ENCODE measurements at regions of chr10 and their contacts with region 1.

Region 1: GRCh38 chr10:32207544-32207943 is 139.4 kb downstream of the EPC1 start:
- DNase-seq: peak; percentile 28
- ATAC-seq: 0 out of 2 replicates have a peak, but pooled peaks have one; percentile 30
- H3K4me3 ChIP-seq: no peak overlapping the region
- H3K27ac ChIP-seq: no peak overlapping the region
- H3K4me1 ChIP-seq: peaks cover 1% of the 10 kb centered on the region; the same call in 1 of the 2 replicates
- H3K27me3 ChIP-seq: no peaks in the 10 kb centered on the region; the same call in 1 of the 2 replicates
- CTCF ChIP-seq: peak; percentile 63
- POLR2A ChIP-seq: no peak
- RAD21 ChIP-seq: peak; percentile 76

Region 2: DNA sequence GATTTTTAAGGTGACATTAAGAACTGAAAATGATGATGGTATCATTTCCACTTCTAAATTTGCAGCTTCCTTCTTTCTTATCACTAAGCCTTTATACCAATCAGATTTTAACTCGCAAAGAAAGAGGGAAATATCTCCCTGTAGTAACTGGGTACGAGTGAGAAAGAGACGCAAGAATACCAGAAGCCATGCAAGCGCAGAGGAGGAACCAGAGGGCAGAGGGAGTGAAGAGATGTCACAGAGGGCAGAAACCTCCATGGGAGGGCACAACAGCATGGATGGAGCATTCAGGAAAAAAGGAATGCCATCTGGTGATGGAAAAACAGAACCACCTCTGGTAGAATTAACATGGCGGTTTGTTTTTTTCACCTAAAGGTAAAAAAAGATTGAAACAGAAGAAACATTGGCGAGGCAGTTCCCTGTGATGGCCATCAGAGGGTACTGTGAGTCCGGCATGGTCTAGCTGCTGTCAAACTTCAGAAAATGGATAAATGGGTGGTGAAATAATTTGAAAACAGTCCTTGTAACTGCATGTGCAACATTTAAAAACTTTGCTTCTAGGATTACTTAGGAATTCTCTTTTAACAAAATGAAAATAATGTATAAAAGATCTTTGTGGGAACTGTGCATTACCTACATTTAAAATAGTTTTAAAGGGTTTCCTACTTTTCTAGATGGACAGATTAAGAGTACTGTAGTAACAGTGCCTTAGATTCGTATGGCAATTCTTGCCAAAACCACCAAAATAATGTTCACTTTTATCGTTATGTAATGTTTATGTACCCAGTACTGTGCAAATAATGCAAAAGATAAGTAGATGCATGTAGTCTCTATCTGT is 370.8 kb before region 1 on chr10:
- CTCF ChIA-PET with region 1: interaction called, 6 read pairs
- POLR2A ChIA-PET with region 1: no interaction called
- dilution Hi-C with region 1: no loop called
- in situ Hi-C with region 1: no loop called
- intact Hi-C with region 1: loop called (anchors 5 kb)
- DNase-seq: peak; percentile 48
- ATAC-seq: peak; percentile 65
- H3K4me3 ChIP-seq: no peak overlapping the region
- H3K27ac ChIP-seq: no peak overlapping the region
- H3K4me1 ChIP-seq: no peaks in the 10 kb centered on the region
- H3K27me3 ChIP-seq: no peaks in the 10 kb centered on the region
- CTCF ChIP-seq: peak; percentile 71
- POLR2A ChIP-seq: no peak
- RAD21 ChIP-seq: peak; percentile 80

Region 3: DNA sequence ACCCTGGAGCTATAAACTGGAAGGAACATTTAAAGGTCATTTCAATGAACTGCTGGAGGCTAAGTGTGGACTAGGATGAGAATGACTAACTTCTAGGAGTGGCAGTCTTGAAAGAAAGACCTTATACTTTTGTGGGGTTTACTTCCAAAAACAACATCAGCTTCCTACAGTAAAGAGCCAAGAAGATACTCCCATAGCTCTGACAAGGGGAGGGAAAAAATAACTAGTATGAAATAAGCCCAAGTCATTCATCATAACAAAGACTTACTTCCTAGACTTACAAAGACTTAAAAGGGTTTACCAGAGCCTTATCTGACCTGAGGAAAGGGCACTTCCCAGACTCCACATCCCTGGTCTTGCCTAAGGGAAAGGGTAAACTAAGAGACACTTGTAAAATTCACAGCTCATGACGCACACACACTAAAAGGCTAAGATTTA is 310.6 kb before region 1 on chr10:
- CTCF ChIA-PET with region 1: no interaction called
- POLR2A ChIA-PET with region 1: no interaction called
- dilution Hi-C with region 1: no loop called
- in situ Hi-C with region 1: no loop called
- intact Hi-C with region 1: no loop called
- DNase-seq: peak; percentile 69
- ATAC-seq: peak; percentile 81
- H3K4me3 ChIP-seq: no peak overlapping the region
- H3K27ac ChIP-seq: 0 out of 2 replicates have a peak overlapping the region, but pooled peaks have one; percentile 16
- H3K4me1 ChIP-seq: peaks cover 9% of the 10 kb centered on the region
- H3K27me3 ChIP-seq: no peaks in the 10 kb centered on the region
- CTCF ChIP-seq: no peak
- POLR2A ChIP-seq: no peak
- RAD21 ChIP-seq: no peak

Region 4: DNA sequence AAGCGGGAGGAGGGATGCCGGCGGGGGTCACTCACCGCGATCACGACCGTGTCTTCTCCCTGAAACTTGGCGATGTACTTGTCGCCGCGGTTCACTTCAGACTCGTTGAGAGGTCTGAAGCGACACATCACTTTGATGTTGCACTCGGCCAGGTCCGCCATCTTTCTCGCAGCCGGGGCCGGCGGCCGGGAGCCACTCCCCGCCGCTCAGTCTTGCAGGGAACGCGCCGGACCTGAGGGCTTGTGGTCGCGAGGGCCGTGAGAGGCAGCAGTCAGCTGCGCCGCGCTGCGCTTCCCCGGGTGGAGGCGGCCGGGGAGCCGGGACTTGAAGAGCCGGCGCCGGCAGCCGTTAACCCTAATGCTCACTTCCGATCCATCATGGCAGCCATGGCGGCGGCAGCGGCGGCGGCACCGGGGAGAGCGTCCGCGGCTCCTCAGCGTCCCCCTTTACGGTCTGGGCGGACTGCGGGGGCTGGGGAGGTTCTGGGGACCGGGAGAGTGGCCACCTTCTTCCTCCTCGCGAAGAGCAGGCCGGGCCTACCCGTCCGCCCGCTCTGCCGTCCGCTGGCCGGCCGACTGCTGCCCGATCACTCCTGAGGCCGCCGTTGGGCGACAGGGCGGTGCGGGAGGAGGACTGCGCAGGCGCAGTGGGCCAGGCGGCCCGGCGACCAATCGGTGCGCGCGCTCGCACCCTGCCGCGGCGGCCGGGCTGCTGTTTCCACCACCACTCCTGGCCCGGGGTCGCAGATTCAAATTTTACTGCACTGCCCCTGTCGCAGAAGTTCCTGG is 151.5 kb before region 1 on chr10 and contains the start of gene KIF5B:
- CTCF ChIA-PET with region 1: no interaction called
- POLR2A ChIA-PET with region 1: no interaction called
- dilution Hi-C with region 1: no loop called
- in situ Hi-C with region 1: no loop called
- intact Hi-C with region 1: loop called (anchors 10 kb)
- DNase-seq: peak; percentile 81
- ATAC-seq: peak; percentile 90
- H3K4me3 ChIP-seq: peak within 1 kb of the TSS; percentile 93
- H3K27ac ChIP-seq: peak within 1 kb of the TSS; percentile 96
- H3K4me1 ChIP-seq: peaks cover 4% of the 10 kb centered on the region; the same call in 1 of the 2 replicates
- H3K27me3 ChIP-seq: no peaks in the 10 kb centered on the region
- CTCF ChIP-seq: no peak
- POLR2A ChIP-seq: peak; percentile 98
- RAD21 ChIP-seq: no peak
- total RNA-seq, gene KIF5B: 68.5 and 130 TPM in 2 replicates

Region 5: GRCh38 chr10:32171204-32171603 is 36.3 kb before region 1 on chr10:
- CTCF ChIA-PET with region 1: no interaction called
- POLR2A ChIA-PET with region 1: no interaction called
- dilution Hi-C with region 1: no loop called
- in situ Hi-C with region 1: no loop called
- intact Hi-C with region 1: no loop called
- DNase-seq: no peak
- ATAC-seq: no peak
- H3K4me3 ChIP-seq: no peak overlapping the region
- H3K27ac ChIP-seq: no peak overlapping the region
- H3K4me1 ChIP-seq: no peaks in the 10 kb centered on the region
- H3K27me3 ChIP-seq: peaks cover 7% of the 10 kb centered on the region
- CTCF ChIP-seq: no peak
- POLR2A ChIP-seq: no peak
- RAD21 ChIP-seq: no peak

Region 6: GRCh38 chr10:32437334-32437733 is 229.8 kb after region 1 on chr10:
- CTCF ChIA-PET with region 1: no interaction called
- POLR2A ChIA-PET with region 1: no interaction called
- dilution Hi-C with region 1: no loop called
- in situ Hi-C with region 1: no loop called
- intact Hi-C with region 1: no loop called
- DNase-seq: peak; percentile 22
- ATAC-seq: no peak; the same call in 1 of the 2 replicates
- H3K4me3 ChIP-seq: no peak overlapping the region
- H3K27ac ChIP-seq: no peak overlapping the region
- H3K4me1 ChIP-seq: no peaks in the 10 kb centered on the region
- H3K27me3 ChIP-seq: peaks cover 15% of the 10 kb centered on the region
- CTCF ChIP-seq: no peak
- POLR2A ChIP-seq: no peak
- RAD21 ChIP-seq: no peak

Region 7: GRCh38 chr10:32530231-32530630 is 322.7 kb after region 1 on chr10:
- CTCF ChIA-PET with region 1: no interaction called
- POLR2A ChIA-PET with region 1: no interaction called
- dilution Hi-C with region 1: no loop called
- in situ Hi-C with region 1: no loop called
- intact Hi-C with region 1: no loop called
- DNase-seq: no peak
- ATAC-seq: no peak
- H3K4me3 ChIP-seq: no peak overlapping the region
- H3K27ac ChIP-seq: no peak overlapping the region
- H3K4me1 ChIP-seq: no peaks in the 10 kb centered on the region
- H3K27me3 ChIP-seq: no peaks in the 10 kb centered on the region
- CTCF ChIP-seq: no peak
- POLR2A ChIP-seq: no peak
- RAD21 ChIP-seq: no peak

Measured in IMR-90 (cell line).